Natural killer cell (primary cell): ENCODE measurements at regions of chr21 and their contacts with region 1.

Region 1: GRCh38 chr21:43991447-43991991 is 20.6 kb upstream of the TRAPPC10 start:
- DNase-seq: no peak
- ATAC-seq: no peak
- H3K4me3 ChIP-seq: no peak overlapping the region
- H3K4me3 Mint-ChIP-seq: no peak overlapping the region
- H3K27ac ChIP-seq: no peak overlapping the region
- H3K27ac Mint-ChIP-seq: no peak overlapping the region
- H3K4me1 ChIP-seq: no peaks in the 10 kb centered on the region
- H3K4me1 Mint-ChIP-seq: peaks cover 0 to 1% of the 10 kb centered on the region in 2 donors
- H3K27me3 ChIP-seq: no peaks in the 10 kb centered on the region
- H3K27me3 Mint-ChIP-seq: peaks cover 0 to 2% of the 10 kb centered on the region in 2 donors
- CTCF ChIP-seq: no peak

Region 2: DNA sequence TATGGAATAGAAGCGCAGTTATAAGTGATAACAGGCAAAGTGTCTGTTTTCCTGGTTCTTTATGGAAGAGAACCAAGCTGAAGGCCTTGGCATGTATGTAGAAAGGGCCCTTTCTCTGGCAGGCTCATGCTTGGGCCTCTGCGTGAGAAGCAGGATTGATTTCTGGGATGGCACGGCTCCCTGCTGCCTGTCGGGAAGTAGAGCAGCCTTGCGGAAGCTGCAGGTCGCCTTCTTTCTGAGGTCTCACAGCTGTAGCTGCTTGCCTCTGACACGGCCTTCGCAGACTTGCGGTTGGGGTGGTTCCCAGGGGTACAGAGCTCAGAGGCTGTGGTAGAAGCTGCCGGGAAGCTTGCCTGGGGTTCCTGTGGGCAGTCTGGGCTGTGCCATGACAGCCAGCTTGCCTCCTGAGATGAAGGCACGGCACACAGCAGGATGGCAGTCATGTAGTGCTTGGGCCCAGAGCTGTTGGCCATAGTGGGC is 60.0 kb after region 1 on chr21:
- intact Hi-C with region 1: loop called (anchors 10 kb)
- DNase-seq: peak in 1 of 2 donors; percentile 32
- ATAC-seq: peak in 2 of 3 donors; percentile 45 to 64
- H3K4me3 ChIP-seq: no peak overlapping the region
- H3K4me3 Mint-ChIP-seq: no peak overlapping the region
- H3K27ac ChIP-seq: no peak overlapping the region
- H3K27ac Mint-ChIP-seq: peak overlapping the region; percentile 30 to 86
- H3K4me1 ChIP-seq: peaks cover 20% of the 10 kb centered on the region
- H3K4me1 Mint-ChIP-seq: peaks cover 68 to 70% of the 10 kb centered on the region in 2 donors
- H3K27me3 ChIP-seq: no peaks in the 10 kb centered on the region
- H3K27me3 Mint-ChIP-seq: no peaks in the 10 kb centered on the region
- CTCF ChIP-seq: no peak